ENCODE measurements at regions of chr17 and their contacts with region 1.

Region 1: DNA sequence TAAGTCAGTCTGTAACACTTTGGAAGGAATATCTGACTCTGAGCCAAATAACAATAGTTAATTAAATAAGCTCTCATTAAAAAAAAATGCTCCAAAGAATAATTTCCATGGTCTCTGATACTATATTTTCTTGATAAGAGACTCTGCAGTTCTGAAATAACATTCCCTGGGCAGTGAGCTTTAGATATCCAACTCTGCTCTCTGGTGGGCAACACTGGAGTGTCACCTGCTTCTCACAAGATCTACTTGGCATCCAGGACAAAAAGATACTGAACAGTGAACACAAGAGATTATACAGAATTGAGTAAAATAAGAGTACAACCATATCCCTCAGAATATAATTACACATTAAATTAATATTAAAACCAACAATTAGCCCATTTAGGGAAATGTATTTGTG is 13.7 kb downstream of the BLMH start:
- DNase-seq: peak in 1 of 2 experiments; percentile 40
- H3K4me3 ChIP-seq: no peak overlapping the region
- H3K27ac ChIP-seq: no peak overlapping the region
- H3K4me1 ChIP-seq: 0 out of 2 replicates have a peak, but pooled peaks cover 6% of the 10 kb centered on the region
- H3K27me3 ChIP-seq: no peaks in the 10 kb centered on the region
- CTCF ChIP-seq: peak; percentile 57

Region 2: GRCh38 chr17:29133146-29133713 is 1144.8 kb before region 1 on chr17:
- CTCF ChIA-PET with region 1: no interaction called
- POLR2A ChIA-PET with region 1: interaction called, 11 read pairs
- intact Hi-C with region 1: no loop called
- DNase-seq: peak; percentile 83 to 89
- H3K4me3 ChIP-seq: peak overlapping the region; percentile 19; the same call in 1 of the 2 replicates
- H3K27ac ChIP-seq: peak overlapping the region; percentile 68
- H3K4me1 ChIP-seq: peaks cover 47% of the 10 kb centered on the region
- H3K27me3 ChIP-seq: no peaks in the 10 kb centered on the region
- CTCF ChIP-seq: no peak

Region 3: GRCh38 chr17:30124273-30124796 is 153.7 kb before region 1 on chr17:
- CTCF ChIA-PET with region 1: interaction called, 3 read pairs
- POLR2A ChIA-PET with region 1: no interaction called
- intact Hi-C with region 1: loop called (anchors 1 kb)
- DNase-seq: no peak
- H3K4me3 ChIP-seq: no peak overlapping the region
- H3K27ac ChIP-seq: no peak overlapping the region
- H3K4me1 ChIP-seq: no peaks in the 10 kb centered on the region
- H3K27me3 ChIP-seq: no peaks in the 10 kb centered on the region
- CTCF ChIP-seq: no peak